Activated T-helper 2 cell treated with anti-CD3 and anti-CD28 coated beads, Interferon-gamma antibody, Interleukin-2, Interleukin-4, amounts not matched to agents 10 μg/mL and 5 μg/mL and 100 μg/mL, durations not matched to agents 14 hours and 24 hours and 36 hours (primary cell): ENCODE measurements at regions of chr3 and their contacts with region 1.

Region 1: GRCh38 chr3:152205097-152205593 is 63.6 kb upstream of the MBNL1 start:
- DNase-seq: no peak
- H3K4me3 Mint-ChIP-seq: peak overlapping the region; percentile 86
- H3K27ac Mint-ChIP-seq: peak overlapping the region; percentile 88
- H3K4me1 Mint-ChIP-seq: peaks cover 73% of the 10 kb centered on the region
- H3K27me3 Mint-ChIP-seq: no peaks in the 10 kb centered on the region

Region 2: GRCh38 chr3:150763122-150763841 is 1441.9 kb before region 1 on chr3 and contains the start of gene SIAH2:
- intact Hi-C with region 1: loop called (anchors 10 kb)
- DNase-seq: peak; percentile 91
- H3K4me3 Mint-ChIP-seq: peak within 1 kb of the TSS; percentile 100
- H3K27ac Mint-ChIP-seq: peak within 1 kb of the TSS; percentile 100
- H3K4me1 Mint-ChIP-seq: peaks cover 50% of the 10 kb centered on the region
- H3K27me3 Mint-ChIP-seq: no peaks in the 10 kb centered on the region
- total RNA-seq, gene SIAH2: 108 and 116 TPM in 2 replicates

Region 3: GRCh38 chr3:152127058-152127457 is 78.1 kb before region 1 on chr3:
- intact Hi-C with region 1: loop called (anchors 1 kb)
- DNase-seq: no peak
- H3K4me3 Mint-ChIP-seq: no peak overlapping the region
- H3K27ac Mint-ChIP-seq: no peak overlapping the region
- H3K4me1 Mint-ChIP-seq: peaks cover 19% of the 10 kb centered on the region
- H3K27me3 Mint-ChIP-seq: peaks cover 30% of the 10 kb centered on the region

Region 4: GRCh38 chr3:152149832-152150231 is 55.3 kb before region 1 on chr3:
- intact Hi-C with region 1: no loop called
- DNase-seq: no peak
- H3K4me3 Mint-ChIP-seq: no peak overlapping the region
- H3K27ac Mint-ChIP-seq: no peak overlapping the region
- H3K4me1 Mint-ChIP-seq: peaks cover 16% of the 10 kb centered on the region
- H3K27me3 Mint-ChIP-seq: peaks cover 4% of the 10 kb centered on the region

Region 5: GRCh38 chr3:152222327-152222726 is 17.2 kb after region 1 on chr3:
- intact Hi-C with region 1: loop called (anchors 1 kb)
- DNase-seq: no peak
- H3K4me3 Mint-ChIP-seq: peak overlapping the region; percentile 23
- H3K27ac Mint-ChIP-seq: peak overlapping the region; percentile 36
- H3K4me1 Mint-ChIP-seq: peaks cover 59% of the 10 kb centered on the region
- H3K27me3 Mint-ChIP-seq: no peaks in the 10 kb centered on the region

Region 6: DNA sequence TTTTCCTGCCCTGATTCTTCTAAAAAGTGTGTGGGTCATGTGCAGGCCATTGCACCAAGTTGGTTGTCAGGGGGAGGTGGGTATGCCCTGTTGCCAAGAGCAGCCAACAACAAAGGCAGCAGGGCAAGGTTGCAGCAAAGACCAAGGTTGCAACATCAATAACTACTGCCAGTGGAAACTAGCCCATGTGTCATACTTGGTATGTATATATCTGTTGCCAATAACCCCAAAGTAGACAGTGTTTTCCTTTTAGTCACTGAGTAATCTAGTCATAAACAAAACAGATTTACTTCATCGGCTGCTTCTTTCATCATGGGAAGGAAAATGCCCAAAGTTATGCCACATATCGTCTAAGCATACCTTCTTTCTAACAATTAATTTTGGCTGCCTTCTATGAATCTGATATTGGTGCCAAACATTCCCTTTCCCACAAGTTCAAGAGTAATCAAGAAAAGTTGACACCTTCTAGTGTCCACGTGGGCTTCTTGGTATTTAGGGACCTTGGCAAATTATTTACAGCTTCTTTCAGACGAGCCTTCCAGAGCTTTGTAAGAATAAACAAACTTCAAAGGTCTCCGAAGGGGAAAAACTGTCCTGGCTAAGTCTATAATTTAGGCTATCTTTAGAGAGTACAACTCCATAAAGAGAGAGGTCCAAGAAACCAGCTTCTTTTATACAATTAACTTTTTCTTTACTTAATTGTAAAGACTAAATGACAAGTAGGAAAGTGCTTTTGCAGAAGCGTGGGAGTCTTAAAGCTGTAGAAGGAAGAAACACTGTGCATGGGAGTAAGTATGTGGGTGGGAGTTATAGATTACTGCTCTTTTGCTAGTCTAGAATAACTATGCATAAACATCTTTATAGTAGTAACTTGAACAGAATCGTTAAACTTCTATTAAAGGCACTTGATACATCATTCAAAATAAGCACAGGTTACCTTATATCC is 53.6 kb after region 1 on chr3:
- intact Hi-C with region 1: loop called (anchors 1 kb)
- DNase-seq: peak; percentile 49
- H3K4me3 Mint-ChIP-seq: peak overlapping the region; percentile 74
- H3K27ac Mint-ChIP-seq: peak overlapping the region; percentile 97
- H3K4me1 Mint-ChIP-seq: peaks cover 78% of the 10 kb centered on the region
- H3K27me3 Mint-ChIP-seq: no peaks in the 10 kb centered on the region

Region 7: GRCh38 chr3:152695840-152696239 is 490.7 kb after region 1 on chr3:
- intact Hi-C with region 1: loop called (anchors 10 kb)
- DNase-seq: no peak
- H3K4me3 Mint-ChIP-seq: no peak overlapping the region
- H3K27ac Mint-ChIP-seq: no peak overlapping the region
- H3K4me1 Mint-ChIP-seq: peaks cover 27% of the 10 kb centered on the region
- H3K27me3 Mint-ChIP-seq: peaks cover 3% of the 10 kb centered on the region